GM10248 (cell line): ENCODE measurements at regions of chr11 and their contacts with region 1.

Region 1: DNA sequence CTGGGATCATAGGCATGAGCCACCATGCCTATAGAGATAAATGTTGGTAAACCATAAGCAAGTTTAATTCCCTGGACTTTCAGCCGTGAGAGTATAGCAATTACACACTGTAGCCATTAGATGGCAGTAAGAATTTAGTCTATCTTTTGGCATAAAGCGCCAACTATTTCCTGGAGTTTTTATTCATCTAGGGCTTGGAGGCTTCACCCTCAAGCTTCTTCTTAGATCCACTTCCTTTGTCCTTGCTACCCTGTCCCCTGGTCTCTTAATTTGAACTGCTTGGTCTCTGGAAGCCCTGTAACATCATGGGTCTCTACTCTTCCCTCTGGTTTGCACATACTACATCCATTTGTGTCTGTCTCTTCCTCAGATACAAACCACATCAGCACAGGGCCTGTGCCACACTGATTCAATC is 38.2 kb downstream of the OR10A6 start:
- DNase-seq: peak; percentile 52
- CTCF ChIP-seq: peak; percentile 67

Region 2: GRCh38 chr11:7945291-7945690 is 52.4 kb after region 1 on chr11:
- CTCF ChIA-PET with region 1: no interaction called
- POLR2A ChIA-PET with region 1: no interaction called
- DNase-seq: no peak
- CTCF ChIP-seq: no peak

Region 3: GRCh38 chr11:7986768-7987559 is 94.1 kb after region 1 on chr11 and contains the start of gene EIF3F:
- CTCF ChIA-PET with region 1: interaction called, 72 read pairs
- POLR2A ChIA-PET with region 1: no interaction called
- DNase-seq: peak; percentile 93
- CTCF ChIP-seq: peak; percentile 87